HepG2 (cell line): ENCODE measurements at regions of chr5 and their contacts with region 1.

Region 1: GRCh38 chr5:149990518-149991376 is 9.7 kb downstream of the TIGD6 start:
- DNase-seq: peak; percentile 76
- ATAC-seq: peak; percentile 91
- H3K4me3 ChIP-seq: no peak overlapping the region
- H3K27ac ChIP-seq: no peak overlapping the region
- H3K4me1 ChIP-seq: peaks cover 19% of the 10 kb centered on the region
- H3K27me3 ChIP-seq: no peaks in the 10 kb centered on the region
- CTCF ChIP-seq: peak; percentile 93
- EP300 ChIP-seq: no peak
- POLR2A ChIP-seq: no peak
- RAD21 ChIP-seq: peak; percentile 86

Region 2: DNA sequence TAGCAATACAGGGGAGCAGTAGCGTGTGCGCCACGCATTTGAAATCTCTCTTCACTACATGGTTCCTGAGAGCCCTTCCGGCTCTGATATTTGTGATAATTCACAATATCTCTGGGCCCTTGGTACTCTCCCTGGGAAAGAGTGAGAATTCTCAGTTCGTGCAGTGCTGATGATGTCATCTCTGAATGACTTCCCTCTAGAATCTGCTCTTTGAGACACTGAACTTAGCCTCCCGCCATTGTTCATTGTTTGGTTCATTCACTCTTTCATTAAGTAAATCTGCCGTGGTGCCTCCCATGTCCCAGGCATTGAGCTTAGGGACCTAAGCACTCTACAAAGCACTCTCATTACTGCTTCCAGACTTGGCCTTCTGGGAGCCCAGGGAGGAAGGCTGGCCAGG is 166.6 kb before region 1 on chr5:
- CTCF ChIA-PET with region 1: no interaction called
- POLR2A ChIA-PET with region 1: no interaction called
- in situ Hi-C with region 1: no loop called
- intact Hi-C with region 1: no loop called
- DNase-seq: peak; percentile 11
- ATAC-seq: no peak
- H3K4me3 ChIP-seq: no peak overlapping the region
- H3K27ac ChIP-seq: no peak overlapping the region
- H3K4me1 ChIP-seq: peaks cover 9% of the 10 kb centered on the region; the same call in 1 of the 2 replicates
- H3K27me3 ChIP-seq: no peaks in the 10 kb centered on the region
- CTCF ChIP-seq: no peak
- EP300 ChIP-seq: no peak
- POLR2A ChIP-seq: no peak
- RAD21 ChIP-seq: no peak

Region 3: DNA sequence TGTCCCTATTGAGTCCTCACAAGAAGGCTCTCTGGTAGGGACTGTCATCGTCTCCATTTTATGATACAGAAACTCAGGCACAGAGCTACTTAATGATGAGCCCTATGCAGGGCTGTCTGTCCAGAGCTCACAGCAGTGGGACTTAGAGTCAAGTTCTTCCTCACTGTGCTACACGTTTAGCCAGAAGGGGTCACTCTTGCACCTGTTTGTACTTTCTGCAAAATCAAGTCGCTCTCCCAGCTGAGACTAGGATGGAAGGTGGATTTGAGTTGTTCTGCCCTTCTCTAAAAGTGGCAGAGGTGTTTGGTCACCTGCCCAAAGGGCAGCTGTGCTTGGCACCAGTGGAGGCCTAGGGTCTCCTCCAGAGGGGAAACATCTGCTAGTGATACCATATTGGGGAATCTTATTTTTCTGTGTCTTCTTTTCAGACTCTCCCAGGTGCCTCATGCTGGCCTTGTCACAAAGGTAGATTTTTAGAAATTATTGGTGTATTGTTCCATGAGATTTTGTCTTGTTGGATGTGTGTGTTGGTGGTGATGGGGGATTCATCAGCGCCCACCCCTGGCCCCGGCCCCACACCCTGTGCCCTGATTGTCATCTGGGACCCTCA is 156.4 kb before region 1 on chr5:
- CTCF ChIA-PET with region 1: interaction called, 27 read pairs
- POLR2A ChIA-PET with region 1: no interaction called
- in situ Hi-C with region 1: loop called (anchors 5 kb)
- intact Hi-C with region 1: loop called (anchors 1 kb)
- DNase-seq: peak; percentile 60
- ATAC-seq: peak; percentile 64
- H3K4me3 ChIP-seq: no peak overlapping the region
- H3K27ac ChIP-seq: no peak overlapping the region
- H3K4me1 ChIP-seq: no peaks in the 10 kb centered on the region
- H3K27me3 ChIP-seq: no peaks in the 10 kb centered on the region
- CTCF ChIP-seq: peak; percentile 85
- EP300 ChIP-seq: no peak
- POLR2A ChIP-seq: no peak
- RAD21 ChIP-seq: peak; percentile 47; the same call in 1 of the 2 replicates

Region 4: DNA sequence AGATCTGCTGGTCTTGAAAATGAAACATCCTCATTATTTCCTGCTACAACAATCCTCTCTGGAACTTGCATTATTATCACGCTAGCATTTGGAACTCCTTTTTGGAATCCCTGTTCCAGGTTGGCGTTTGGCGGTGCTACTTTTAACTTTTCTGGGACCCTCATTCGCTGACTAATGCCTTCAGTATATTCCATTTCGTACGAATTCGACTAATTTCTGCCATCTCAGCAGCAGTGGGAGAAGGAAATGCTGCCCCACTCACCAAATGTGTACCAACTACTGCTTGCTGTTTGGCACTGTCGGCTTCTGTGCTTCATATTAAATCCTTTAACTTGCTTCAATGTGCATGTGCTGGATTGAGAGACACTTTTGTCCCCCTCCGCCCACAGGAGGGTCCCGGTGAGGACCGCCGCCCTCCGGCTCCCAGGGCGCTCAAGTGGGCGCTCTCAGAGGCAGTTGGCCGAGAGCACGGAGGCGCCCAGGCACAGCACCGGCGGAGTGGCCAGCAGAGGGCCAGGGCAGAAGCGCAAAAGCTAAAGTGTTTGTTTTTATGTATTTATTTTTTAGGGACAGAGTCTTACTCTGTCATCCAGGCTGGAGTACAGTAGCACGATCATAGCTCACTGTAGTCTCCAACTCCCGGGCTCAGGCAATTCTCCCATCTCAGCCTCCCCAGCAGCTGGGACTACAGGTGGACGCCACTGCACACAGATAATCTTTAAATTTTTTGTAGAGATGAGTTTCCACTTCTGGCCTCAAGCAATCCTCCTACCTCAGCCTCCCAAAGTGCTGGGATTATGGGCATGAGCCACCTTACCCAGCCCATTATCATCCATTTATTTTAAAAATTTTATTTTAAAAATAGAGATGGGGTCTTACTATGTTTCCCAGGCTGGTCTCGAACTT is 58.0 kb before region 1 on chr5:
- CTCF ChIA-PET with region 1: interaction called, 26 read pairs
- POLR2A ChIA-PET with region 1: no interaction called
- in situ Hi-C with region 1: loop called (anchors 10 kb)
- intact Hi-C with region 1: loop called (anchors 2 kb)
- DNase-seq: peak; percentile 13
- ATAC-seq: peak; percentile 95
- H3K4me3 ChIP-seq: peak overlapping the region in 2 of 3 experiments; percentile 32; a peak in 3 of 6 replicates
- H3K27ac ChIP-seq: no peak overlapping the region
- H3K4me1 ChIP-seq: peaks cover 34% of the 10 kb centered on the region
- H3K27me3 ChIP-seq: peaks cover 1 to 19% of the 10 kb centered on the region in 2 experiments; a peak in 3 of 5 replicates
- CTCF ChIP-seq: peak; percentile 83
- EP300 ChIP-seq: no peak
- POLR2A ChIP-seq: no peak
- RAD21 ChIP-seq: peak; percentile 61; the same call in 1 of the 2 replicates

Region 5: DNA sequence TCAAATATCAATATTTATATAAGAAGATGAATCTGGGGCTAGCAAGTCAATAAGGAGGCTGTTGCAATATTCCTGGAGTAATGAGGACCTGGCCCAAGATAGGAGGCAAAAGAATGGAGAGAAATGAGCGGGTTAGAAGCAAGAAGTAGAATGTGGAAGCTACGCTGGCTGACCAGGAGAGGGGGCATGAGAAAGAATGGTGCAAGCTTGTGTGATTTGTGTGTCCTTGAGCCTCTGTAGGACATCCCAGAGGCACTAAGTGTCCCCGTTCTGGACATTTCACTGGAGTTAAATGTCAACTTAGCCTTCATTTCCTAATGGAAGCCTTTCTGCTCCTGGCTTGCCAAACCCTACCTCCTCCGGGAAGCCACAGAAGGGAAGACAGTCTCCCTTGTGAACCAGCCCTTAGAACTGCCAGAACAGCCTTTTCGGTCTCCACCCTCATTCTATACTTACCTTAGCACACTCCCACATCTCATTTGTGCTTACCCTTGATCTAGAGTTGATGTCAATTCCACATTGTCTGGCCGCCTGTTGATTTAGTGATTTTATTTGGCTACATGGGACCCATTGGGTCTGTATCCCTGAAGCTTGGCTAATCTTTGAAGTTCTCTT is 39.5 kb before region 1 on chr5:
- CTCF ChIA-PET with region 1: interaction called, 25 read pairs
- POLR2A ChIA-PET with region 1: interaction called, 4 read pairs
- in situ Hi-C with region 1: loop called (anchors 5 kb)
- intact Hi-C with region 1: loop called (anchors 1 kb)
- DNase-seq: peak; percentile 49
- ATAC-seq: peak; percentile 98
- H3K4me3 ChIP-seq: no peak overlapping the region
- H3K27ac ChIP-seq: no peak overlapping the region
- H3K4me1 ChIP-seq: peaks cover 8% of the 10 kb centered on the region
- H3K27me3 ChIP-seq: peaks cover 0 to 3% of the 10 kb centered on the region in 2 experiments; a peak in 1 of 5 replicates
- CTCF ChIP-seq: peak; percentile 61
- EP300 ChIP-seq: no peak
- POLR2A ChIP-seq: no peak
- RAD21 ChIP-seq: peak; percentile 32; the same call in 1 of the 2 replicates

Region 6: GRCh38 chr5:150006318-150006717 is 15.6 kb after region 1 on chr5:
- CTCF ChIA-PET with region 1: no interaction called
- POLR2A ChIA-PET with region 1: no interaction called
- in situ Hi-C with region 1: no loop called
- intact Hi-C with region 1: no loop called
- DNase-seq: no peak
- ATAC-seq: no peak
- H3K4me3 ChIP-seq: no peak overlapping the region
- H3K27ac ChIP-seq: no peak overlapping the region
- H3K4me1 ChIP-seq: peaks cover 15% of the 10 kb centered on the region
- H3K27me3 ChIP-seq: no peaks in the 10 kb centered on the region; a peak in 1 of 5 replicates
- CTCF ChIP-seq: no peak
- EP300 ChIP-seq: no peak
- POLR2A ChIP-seq: no peak
- RAD21 ChIP-seq: no peak